GM18951 (cell line): ENCODE measurements at regions of chr3 and their contacts with region 1.

Region 1: DNA sequence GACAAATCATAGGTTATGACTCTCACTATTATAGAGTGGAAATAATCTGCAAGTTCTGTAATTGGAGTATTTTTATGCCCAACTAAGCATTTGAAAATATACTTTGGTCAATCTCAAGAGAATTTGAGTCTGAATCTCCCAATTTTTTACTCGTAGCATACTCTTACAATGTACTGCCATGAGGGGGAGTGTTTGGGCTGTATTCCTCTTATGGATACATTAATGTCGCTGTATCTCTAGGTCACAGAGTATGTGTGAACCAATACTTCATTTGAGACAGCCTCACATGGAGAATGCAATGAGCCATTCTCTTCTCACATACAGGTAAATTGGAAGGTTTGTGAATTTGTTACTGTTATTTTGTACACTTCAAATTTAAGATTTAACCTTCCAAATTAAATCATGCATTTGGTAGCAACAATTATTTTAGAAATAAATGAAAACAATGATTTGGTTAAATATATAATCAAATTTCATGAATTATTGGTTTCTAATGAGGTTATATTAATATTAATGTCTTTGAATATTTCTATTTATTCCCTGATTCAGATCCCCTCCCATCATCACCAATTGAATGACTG is 5.5 kb upstream of the CD200 start:
- POLR2A ChIP-seq: no peak

Region 2: GRCh38 chr3:112111785-112112402 is 215.6 kb before region 1 on chr3:
- in situ Hi-C with region 1: loop called (anchors 10 kb)
- POLR2A ChIP-seq: no peak

Region 3: DNA sequence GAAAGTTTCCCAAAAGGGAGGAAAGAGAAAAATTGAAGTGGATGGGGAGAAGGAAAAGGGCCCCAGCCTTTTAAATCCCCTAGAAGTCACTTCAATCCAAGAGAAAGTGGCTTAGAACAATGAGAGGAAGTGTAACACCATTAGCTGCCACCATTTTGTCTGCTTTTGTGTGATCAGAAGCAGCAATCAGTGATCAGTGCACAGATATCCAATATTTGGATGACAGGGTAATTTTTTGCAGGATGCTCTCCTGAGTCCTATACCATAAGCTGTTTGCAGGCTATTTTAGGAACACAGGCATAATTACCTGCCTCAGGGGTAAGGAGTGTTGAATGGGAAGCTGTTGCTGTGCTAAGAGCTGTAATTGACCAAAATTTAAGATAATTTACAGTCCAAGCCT is 265.8 kb after region 1 on chr3:
- in situ Hi-C with region 1: no loop called
- POLR2A ChIP-seq: no peak